GM18951 (cell line): ENCODE measurements at regions of chr3 and their contacts with region 1.

Region 1: DNA sequence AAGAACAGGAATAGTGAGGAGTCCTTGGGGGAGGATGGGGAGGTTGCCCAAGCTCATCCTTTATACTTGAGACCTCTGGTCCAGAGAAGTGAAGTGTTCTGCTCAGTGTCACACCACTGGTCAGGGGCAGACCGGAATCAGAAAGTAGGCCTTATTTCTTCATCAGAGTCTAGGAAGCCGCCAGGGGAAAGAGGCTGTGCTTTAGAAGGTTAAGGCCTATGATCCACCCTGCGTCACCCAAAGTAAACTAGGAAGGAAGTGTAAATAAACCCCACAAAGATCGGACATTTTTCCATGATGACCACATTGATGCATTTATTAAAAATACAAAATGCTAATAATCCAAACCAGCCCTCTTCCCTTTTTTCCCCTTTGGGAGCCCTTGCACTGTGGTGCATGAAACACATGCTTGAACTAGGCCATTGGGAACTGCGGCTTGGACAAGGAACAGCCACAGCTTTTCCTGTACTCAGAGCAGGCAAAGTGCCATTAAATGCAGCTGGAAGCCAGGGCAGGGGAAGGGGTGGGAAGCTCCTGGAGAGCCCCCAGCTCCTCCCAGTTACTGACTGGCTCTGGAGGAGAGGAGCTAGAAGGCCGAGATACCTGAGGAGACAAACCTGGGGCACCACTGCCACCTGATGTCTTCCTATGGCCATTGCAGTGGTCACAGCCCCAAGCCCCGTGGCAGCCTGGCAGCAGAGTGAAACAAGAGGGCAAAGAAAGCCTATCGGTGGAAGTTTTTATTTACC is 37.0 kb downstream of the CDC25A start:
- POLR2A ChIP-seq: no peak

Region 2: DNA sequence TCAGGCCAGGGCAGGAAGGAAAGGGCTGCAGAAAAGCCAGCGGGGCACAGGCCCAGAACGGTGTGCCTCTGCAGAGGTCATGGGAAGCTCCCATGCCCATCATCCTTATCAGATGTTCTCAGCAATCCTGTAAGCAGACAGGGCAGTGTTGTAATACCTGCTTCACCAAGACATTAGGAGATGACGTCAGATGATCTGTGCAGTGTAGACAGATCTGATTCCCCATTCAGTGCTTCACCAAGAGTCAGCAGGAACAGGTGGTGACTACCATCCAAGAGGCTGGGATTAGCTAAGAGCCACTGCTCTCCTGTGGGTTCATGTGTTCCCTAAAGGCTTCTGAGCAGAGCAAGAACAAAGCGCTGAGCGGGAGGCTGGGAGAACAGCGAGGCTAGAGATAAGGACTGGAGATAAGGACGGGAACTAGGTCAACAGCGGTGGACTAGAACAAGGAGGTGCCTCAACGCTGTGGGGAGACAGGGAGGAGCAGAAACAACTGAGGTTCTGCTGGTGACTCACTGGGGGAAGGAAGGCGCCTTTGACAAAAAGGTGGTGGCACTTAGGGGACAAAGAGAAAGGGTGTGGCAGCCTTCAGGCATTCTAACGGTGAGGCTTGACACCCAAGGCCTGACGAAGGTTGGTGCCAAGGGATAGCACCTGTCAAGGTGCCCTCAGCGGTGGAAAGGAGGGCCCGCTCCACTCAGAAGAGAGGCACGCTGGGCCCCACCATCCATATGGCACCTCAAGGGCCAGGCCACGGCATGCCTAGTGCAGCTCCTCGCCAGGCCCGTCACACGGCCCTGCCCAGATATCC is 1203.0 kb before region 1 on chr3:
- in situ Hi-C with region 1: no loop called
- POLR2A ChIP-seq: no peak

Region 3: DNA sequence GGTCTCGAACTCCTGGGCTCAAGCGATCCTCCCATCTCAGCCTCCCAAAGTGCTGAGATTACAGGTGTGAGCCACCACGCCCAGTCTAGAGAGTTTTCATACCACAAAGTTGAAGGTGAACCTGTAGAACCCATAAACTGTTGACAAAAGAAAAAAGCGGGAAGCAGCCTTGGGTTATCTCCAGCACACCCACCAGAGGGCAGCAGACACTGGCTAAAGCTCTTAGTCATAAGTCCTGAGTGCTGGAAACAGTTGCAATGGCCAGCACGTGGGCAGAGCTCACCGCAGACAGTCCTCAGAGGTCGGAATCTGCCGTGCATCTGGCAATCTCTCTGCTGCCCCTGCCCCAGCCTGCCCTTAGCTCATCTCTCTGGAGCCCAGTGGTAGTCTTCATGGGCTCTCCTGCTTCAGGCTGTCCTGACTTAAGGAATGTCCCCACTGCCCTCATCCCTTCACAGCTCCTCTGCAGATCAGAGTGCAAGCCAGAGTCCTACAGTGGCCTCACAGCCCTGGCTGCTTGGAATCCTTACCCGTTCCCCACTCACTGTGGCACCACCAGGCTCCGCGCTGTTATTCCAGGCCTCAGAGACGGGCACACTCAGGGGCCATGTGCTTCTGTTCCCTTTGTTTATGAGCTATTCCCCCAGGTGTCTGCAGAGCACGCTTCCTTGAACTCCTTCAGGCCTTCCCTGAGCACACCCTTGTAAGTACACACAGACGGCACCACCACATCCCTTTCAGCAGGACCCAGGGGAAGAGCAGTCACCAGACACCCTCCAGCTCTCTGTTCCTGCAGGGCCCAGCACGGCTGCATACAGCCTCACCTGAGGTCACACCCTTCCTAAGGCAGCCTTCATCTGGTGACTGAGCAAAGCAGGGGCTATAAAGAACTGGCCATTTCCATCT is 628.9 kb before region 1 on chr3:
- in situ Hi-C with region 1: loop called (anchors 10 kb)
- POLR2A ChIP-seq: no peak

Region 4: DNA sequence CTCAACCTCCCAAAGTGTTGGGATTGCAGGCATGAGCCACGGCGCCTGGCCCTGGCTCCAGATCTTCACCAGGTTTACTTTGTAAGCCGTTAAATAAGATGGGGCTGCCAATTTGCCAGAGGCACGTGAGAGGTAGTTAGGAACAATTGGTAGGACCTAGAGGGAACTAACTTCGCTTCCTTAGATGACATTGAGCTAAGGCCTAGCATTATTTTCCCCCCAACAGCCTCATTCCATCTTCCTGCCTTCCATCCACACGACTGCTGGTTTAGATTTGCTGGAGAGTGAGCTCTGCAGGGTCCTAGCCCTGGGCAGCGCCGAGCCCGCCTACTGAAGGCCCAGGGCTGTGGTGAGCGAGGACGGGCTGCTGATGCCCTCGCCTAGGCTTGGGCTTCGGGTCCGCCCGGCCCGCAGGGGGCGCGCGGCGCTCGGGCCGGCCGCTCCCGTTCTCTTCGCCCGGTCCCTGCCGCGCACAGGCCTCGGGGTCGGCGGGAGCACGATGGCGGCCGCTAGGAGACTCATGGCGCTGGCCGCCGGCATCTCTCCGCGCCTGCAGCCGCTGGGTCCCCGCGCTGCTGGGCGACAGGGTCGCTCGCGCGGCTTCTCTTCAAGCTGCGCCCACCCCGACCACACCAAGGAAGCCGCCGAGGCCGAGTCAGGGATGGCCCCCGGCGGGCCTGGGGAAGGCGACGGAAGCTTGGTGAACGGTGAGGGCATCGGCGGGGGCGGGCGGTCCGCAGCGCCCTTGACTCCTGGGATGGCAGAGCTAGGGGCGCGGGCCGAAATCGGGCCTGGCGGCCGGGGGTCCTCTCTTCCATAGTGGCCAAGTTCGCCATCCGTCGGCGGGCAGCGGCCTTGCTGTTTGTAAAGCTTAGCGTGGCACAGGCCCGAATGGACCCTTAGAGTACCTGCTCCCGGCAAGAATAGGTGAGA is 326.4 kb before region 1 on chr3:
- in situ Hi-C with region 1: loop called (anchors 10 kb)
- POLR2A ChIP-seq: peak; percentile 85

Region 5: DNA sequence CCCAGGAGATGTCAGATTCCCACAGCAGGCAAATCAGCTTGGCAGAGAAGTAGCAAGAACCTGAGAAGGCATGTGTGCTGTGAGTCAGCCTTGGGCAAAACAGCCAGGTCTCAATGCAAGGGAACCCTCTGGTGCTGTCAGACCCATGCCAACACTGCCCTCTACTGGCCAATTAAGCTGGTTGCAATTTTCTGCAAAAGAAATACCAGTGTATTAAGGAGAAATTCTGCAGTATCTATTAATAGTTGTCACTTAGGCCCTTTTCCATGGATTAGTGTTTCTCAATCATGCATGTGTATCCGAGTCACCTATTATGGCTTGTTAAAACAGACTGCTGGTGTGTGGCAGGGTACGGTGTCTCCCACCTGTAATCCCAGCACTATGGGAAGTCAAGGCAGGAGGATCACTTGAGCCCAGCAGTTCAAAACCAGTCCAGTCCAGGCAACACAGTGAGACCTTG is 161.2 kb before region 1 on chr3:
- in situ Hi-C with region 1: loop called (anchors 10 kb)
- POLR2A ChIP-seq: no peak